Natural killer cell (primary cell): ENCODE measurements at regions of chr14 and their contacts with region 1.

Region 1: DNA sequence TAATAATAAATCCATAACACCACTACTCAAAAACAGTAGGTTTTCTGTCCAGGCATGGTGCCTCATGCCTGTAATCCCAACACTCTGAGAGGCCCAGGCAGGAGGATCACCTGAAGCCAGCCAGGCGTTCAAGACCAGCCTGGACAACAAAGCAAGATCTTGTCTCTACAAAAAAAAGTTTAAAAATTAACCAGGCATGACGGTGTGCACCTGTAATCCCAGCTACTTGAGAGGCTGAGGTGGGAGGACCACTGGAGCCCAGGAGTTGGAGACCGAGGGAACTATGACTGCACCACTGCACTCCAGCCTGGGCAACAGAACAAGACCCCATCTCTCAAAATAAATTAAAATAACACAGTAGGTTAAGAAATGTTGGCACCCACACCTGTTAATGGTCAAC is 44.5 kb upstream of the AP4S1 start:
- DNase-seq: no peak
- ATAC-seq: no peak
- H3K4me3 ChIP-seq: no peak overlapping the region
- H3K4me3 Mint-ChIP-seq: no peak overlapping the region
- H3K27ac ChIP-seq: no peak overlapping the region
- H3K27ac Mint-ChIP-seq: peak overlapping the region in 1 of 2 donors; percentile 35
- H3K4me1 ChIP-seq: no peaks in the 10 kb centered on the region
- H3K4me1 Mint-ChIP-seq: peaks cover 7 to 19% of the 10 kb centered on the region in 2 donors
- H3K27me3 ChIP-seq: no peaks in the 10 kb centered on the region
- H3K27me3 Mint-ChIP-seq: no peaks in the 10 kb centered on the region
- CTCF ChIP-seq: no peak

Region 2: GRCh38 chr14:31084385-31084784 is 103.4 kb after region 1 on chr14:
- intact Hi-C with region 1: loop called (anchors 1 kb)
- DNase-seq: no peak
- ATAC-seq: no peak
- H3K4me3 ChIP-seq: no peak overlapping the region
- H3K4me3 Mint-ChIP-seq: no peak overlapping the region
- H3K27ac ChIP-seq: no peak overlapping the region
- H3K27ac Mint-ChIP-seq: no peak overlapping the region
- H3K4me1 ChIP-seq: no peaks in the 10 kb centered on the region
- H3K4me1 Mint-ChIP-seq: no peaks in the 10 kb centered on the region
- H3K27me3 ChIP-seq: no peaks in the 10 kb centered on the region
- H3K27me3 Mint-ChIP-seq: no peaks in the 10 kb centered on the region
- CTCF ChIP-seq: no peak